A673 (cell line): ENCODE measurements at regions of chr2 and their contacts with region 1.

Region 1: DNA sequence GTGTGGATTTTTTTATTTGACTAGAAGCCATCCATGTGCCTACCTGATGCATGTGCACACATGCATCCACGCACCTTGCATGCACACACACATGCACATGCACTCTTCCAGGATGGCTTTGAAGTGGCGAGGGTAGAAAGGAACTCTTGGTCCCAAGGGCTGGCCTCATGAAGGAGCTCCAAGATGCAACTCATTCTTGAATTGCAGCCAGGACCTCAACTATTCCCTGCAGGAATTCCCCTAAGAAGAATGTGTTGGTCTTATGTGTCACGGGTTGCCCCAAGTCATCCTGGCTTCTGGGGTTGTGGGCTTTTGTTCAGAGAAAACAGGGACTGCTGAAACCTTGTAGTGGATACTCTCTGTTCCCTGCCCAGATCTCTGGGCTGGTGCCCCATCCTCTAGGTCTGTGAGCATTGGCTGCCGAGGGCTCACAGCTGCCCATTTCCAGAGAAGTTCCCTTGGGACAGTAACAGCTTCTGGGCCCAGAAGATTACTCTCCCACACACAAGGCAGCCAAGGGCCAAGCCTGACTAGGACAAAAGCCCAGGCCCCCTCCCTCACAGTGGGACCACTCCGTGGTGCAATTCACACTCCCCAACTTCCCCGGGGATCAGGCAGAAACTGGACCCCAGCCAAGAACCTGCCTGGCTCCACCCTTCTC is 137.6 kb downstream of the COPS8 start:
- DNase-seq: peak; percentile 69
- H3K4me3 ChIP-seq: no peak overlapping the region
- H3K27ac ChIP-seq: no peak overlapping the region
- H3K4me1 ChIP-seq: peaks cover 36% of the 10 kb centered on the region
- H3K27me3 ChIP-seq: no peaks in the 10 kb centered on the region
- CTCF ChIP-seq: no peak

Region 2: DNA sequence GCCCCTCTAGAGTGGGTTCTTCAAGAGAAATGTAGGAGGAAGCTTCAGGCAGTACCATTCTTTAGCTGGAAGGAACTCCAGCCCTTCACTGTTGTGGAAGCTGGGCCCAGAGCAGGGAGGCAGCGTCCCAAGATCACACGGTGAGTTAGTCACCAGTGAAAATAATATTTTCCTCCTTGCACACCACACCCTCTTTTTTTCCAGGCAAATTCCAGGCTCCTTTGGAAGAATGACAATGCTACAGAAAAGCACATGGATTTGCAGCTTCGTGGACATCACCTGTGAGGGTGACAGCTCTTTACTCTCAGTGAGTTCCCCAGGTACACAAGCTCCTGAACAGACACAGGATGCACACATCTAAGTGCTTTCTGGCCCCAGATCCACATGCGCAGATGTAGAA is 33.6 kb after region 1 on chr2:
- CTCF ChIA-PET with region 1: no interaction called
- POLR2A ChIA-PET with region 1: no interaction called
- intact Hi-C with region 1: loop called (anchors 5 kb)
- DNase-seq: no peak
- H3K4me3 ChIP-seq: no peak overlapping the region
- H3K27ac ChIP-seq: no peak overlapping the region
- H3K4me1 ChIP-seq: peaks cover 5% of the 10 kb centered on the region
- H3K27me3 ChIP-seq: peaks cover 10% of the 10 kb centered on the region
- CTCF ChIP-seq: no peak

Region 3: DNA sequence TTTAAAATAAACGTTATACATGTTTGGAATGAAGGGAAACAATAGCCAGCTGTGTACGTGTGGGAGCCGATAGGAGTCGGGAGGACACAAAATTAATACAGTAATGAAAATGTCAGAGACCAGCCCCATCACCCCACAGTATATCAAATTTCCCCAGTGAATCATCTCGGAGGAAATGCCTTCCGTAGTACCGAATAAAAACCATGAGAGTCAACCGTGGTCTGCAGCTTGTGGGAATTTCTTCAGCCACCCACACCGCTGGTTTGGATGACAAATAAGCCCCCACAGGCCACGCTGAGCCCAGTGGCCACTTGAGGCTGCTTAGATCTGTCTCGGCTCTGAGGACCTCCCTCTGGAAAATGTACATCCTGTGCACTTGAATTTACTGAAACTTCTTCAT is 56.9 kb after region 1 on chr2:
- CTCF ChIA-PET with region 1: no interaction called
- POLR2A ChIA-PET with region 1: no interaction called
- intact Hi-C with region 1: loop called (anchors 5 kb)
- DNase-seq: peak; percentile 69
- H3K4me3 ChIP-seq: no peak overlapping the region
- H3K27ac ChIP-seq: no peak overlapping the region
- H3K4me1 ChIP-seq: peaks cover 35% of the 10 kb centered on the region
- H3K27me3 ChIP-seq: peaks cover 51% of the 10 kb centered on the region
- CTCF ChIP-seq: no peak